Ascending aorta (tissue), 2 donors: ENCODE measurements at regions of chr12 and their contacts with region 1.

Region 1: DNA sequence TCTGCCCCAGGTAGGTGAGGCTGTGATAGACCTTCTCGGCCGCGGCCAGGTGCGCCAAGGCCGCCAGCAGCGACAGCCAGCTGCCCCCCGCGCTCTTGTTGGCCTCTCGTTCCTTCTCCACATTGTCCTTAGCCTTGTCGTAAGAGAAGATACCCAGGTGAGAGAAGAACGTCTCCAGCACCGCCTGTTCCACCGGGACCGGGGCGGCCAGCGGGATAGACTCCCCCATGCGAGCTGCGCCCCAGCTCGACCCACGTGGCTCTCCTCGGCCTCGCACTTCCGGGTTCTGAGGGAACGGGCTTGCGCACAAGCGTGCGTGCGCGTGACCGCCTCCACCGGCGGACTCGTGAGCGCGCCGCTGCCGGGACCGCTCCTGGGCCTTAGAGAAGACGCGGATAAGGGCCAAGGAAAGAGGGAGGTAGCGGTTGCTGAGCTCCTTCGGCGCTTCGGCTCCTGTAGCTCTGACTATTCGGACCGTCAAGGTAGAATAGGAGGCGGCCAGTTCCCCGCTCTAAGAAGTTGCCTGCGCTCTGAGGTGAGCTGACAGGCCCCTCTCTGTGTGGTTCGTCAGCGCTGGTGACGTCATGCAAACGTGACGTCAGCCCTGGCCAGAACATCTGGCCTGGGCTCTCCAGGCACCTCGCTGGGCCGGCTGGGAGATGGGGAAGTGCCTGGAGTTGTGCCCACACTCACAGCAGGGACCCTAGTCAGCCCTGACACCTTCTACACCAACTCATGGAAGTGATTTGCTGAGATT is at the start of gene KICS2:
- DNase-seq: peak; percentile 78 to 96
- H3K4me3 ChIP-seq: peak within 1 kb of the TSS; percentile 74 to 79
- H3K27ac ChIP-seq: peak within 1 kb of the TSS; percentile 91 to 95
- H3K4me1 ChIP-seq: peaks cover 0 to 5% of the 10 kb centered on the region in 2 donors
- H3K27me3 ChIP-seq: no peaks in the 10 kb centered on the region
- CTCF ChIP-seq: no peak
- total RNA-seq, gene KICS2: 0.75 TPM

Region 2: GRCh38 chr12:63779498-63780481 is 442.4 kb before region 1 on chr12 and contains the start of gene RXYLT1:
- intact Hi-C with region 1: loop called (anchors 1 kb)
- DNase-seq: peak; percentile 16 to 89
- H3K4me3 ChIP-seq: peak within 1 kb of the TSS; percentile 73 to 84
- H3K27ac ChIP-seq: peak within 1 kb of the TSS; percentile 86
- H3K4me1 ChIP-seq: peaks cover 0 to 7% of the 10 kb centered on the region in 2 donors
- H3K27me3 ChIP-seq: no peaks in the 10 kb centered on the region
- CTCF ChIP-seq: no peak
- total RNA-seq, gene RXYLT1: 1.5 TPM

Region 3: GRCh38 chr12:64088431-64089349 is 133.5 kb before region 1 on chr12:
- intact Hi-C with region 1: loop called (anchors 10 kb)
- DNase-seq: peak; percentile 9 to 80
- H3K4me3 ChIP-seq: peak overlapping the region in 1 of 2 donors; percentile 29
- H3K27ac ChIP-seq: peak overlapping the region; percentile 26 to 36
- H3K4me1 ChIP-seq: peaks cover 5 to 15% of the 10 kb centered on the region in 2 donors
- H3K27me3 ChIP-seq: no peaks in the 10 kb centered on the region
- CTCF ChIP-seq: no peak

Region 4: DNA sequence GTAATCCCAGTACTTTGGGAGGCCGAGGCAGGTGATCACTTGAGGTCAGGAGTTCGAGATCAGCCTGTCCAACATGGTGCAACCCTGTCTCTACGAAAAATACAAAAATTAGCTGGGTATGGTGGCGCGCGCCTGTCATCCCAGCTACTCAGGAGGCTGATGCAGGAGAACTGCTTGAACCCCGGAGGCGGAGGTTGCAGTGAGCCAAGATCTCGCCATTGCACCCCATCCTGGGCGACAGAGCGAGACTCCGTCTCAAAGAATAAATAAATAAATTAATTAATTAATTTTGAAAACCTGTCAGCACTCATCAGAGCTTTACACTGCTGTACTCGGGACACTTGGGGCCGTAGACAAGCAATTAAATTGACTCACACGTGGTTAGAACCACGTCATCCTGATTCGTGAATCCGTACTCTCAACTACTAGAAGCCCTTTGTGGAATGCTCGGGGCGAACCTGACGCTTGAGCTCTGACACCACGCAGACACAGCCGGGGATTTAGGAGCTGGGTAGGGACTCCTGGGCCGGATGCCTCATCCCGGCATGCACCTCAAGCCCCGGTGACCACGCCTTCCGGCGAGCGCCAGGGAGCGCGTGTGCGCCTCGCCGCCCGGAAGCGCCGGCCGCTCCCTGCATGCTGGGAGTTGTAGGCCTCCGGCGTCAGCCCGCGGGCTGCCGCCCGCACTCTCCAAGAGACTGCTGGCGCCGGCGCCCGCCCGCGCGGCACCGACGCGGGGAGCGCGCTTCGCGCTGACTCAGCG is 181.7 kb after region 1 on chr12 and contains the start of gene XPOT:
- intact Hi-C with region 1: loop called (anchors 1 kb)
- DNase-seq: peak; percentile 85 to 97
- H3K4me3 ChIP-seq: peak within 1 kb of the TSS; percentile 76 to 98
- H3K27ac ChIP-seq: peak within 1 kb of the TSS; percentile 97 to 98
- H3K4me1 ChIP-seq: peaks cover 0 to 10% of the 10 kb centered on the region in 2 donors
- H3K27me3 ChIP-seq: no peaks in the 10 kb centered on the region
- CTCF ChIP-seq: no peak
- total RNA-seq, gene XPOT: 24.5 TPM

Region 5: DNA sequence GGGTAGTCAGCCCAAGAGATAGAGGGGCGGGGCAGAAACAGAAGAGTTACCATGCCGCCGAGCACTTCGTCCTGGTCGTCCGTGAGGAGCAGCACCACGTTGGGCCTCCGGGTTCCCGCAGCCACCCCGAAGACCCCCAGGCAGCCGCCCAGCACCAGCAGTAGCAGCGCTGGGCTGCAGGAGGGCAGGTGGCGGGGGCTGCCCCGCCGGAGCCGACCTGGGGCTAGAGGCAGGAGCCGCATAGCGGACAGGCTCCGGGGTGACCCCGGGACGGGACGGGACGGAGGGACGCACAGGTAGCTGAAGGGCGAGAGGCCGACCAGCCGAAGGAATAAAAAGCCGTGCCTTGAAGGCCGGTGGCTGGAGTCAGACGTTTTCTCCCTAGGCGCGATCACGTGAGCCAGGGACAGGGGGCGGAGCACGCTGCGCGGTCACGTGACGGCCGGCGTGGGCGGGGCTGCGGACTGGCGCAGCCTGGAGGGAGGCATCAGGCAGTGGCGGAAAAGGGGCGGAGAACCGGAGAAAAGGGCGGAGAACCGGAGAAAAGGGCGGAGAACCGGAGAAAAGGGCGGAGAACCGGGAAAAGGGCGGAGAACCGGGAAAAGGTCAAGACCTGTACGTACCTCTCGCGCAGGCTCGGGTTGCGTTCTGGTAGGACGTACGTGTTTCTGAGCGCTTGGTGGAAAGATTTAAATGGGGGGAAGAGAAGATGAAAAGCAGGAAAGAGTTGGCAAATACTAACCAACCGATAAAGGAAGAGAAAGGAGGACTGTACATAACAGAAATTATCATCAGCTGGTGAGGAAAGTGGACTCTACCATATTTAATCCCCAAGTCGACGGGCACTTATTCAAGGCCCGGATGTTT is 537.1 kb after region 1 on chr12 and contains the start of gene GNS:
- intact Hi-C with region 1: loop called (anchors 10 kb)
- DNase-seq: peak; percentile 93 to 98
- H3K4me3 ChIP-seq: peak within 1 kb of the TSS; percentile 79 to 89
- H3K27ac ChIP-seq: peak within 1 kb of the TSS; percentile 81 to 86
- H3K4me1 ChIP-seq: peaks cover 0 to 3% of the 10 kb centered on the region in 2 donors
- H3K27me3 ChIP-seq: no peaks in the 10 kb centered on the region
- CTCF ChIP-seq: no peak
- total RNA-seq, gene GNS: 105 TPM